ENCODE measurements at regions of chr9 and their contacts with region 1.

Region 1: GRCh38 chr9:18114559-18115475 is 359.1 kb upstream of the ADAMTSL1 start:
- DNase-seq: peak in 1 of 10 donors; percentile 68
- H3K4me3 ChIP-seq: no peak overlapping the region
- H3K27ac ChIP-seq: no peak overlapping the region
- H3K27me3 ChIP-seq: peaks cover 0 to 11% (median 0%) of the 10 kb centered on the region in 45 donors
- CTCF ChIP-seq: no peak

Region 2: DNA sequence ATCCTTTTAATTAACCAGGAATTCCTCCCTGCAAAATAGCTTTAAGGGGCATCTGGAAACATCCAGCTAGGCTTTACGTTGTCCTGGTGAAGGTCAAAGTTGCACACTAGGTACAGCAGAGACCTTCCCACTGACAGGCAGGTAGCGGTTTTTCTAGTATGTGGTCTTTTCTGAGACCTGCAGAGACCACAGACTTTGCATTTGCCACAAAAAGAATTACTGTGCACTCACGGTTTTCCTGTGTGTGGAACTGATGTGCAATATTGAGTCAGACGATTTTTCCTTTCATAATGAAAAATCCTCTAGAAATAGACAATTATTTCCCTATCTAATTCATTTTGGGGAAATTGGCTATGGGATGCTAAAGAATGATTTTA is 57.8 kb before region 1 on chr9:
- intact Hi-C with region 1: loop called in 1 of 2 experiments (anchors 10 kb)
- DNase-seq: no peak
- H3K4me3 ChIP-seq: no peak overlapping the region
- H3K27ac ChIP-seq: no peak overlapping the region
- H3K27me3 ChIP-seq: no peaks in the 10 kb centered on the region
- CTCF ChIP-seq: no peak

Region 3: GRCh38 chr9:18490635-18491370 is 376.0 kb after region 1 on chr9:
- intact Hi-C with region 1: no loop called
- DNase-seq: no peak
- H3K4me3 ChIP-seq: no peak overlapping the region
- H3K27ac ChIP-seq: no peak overlapping the region
- H3K27me3 ChIP-seq: peaks cover 0 to 3% (median 0%) of the 10 kb centered on the region in 45 donors
- CTCF ChIP-seq: no peak

Measured in dorsolateral prefrontal cortex (tissue), 120 donors.